ENCODE measurements at regions of chr13 and their contacts with region 1.

Region 1: DNA sequence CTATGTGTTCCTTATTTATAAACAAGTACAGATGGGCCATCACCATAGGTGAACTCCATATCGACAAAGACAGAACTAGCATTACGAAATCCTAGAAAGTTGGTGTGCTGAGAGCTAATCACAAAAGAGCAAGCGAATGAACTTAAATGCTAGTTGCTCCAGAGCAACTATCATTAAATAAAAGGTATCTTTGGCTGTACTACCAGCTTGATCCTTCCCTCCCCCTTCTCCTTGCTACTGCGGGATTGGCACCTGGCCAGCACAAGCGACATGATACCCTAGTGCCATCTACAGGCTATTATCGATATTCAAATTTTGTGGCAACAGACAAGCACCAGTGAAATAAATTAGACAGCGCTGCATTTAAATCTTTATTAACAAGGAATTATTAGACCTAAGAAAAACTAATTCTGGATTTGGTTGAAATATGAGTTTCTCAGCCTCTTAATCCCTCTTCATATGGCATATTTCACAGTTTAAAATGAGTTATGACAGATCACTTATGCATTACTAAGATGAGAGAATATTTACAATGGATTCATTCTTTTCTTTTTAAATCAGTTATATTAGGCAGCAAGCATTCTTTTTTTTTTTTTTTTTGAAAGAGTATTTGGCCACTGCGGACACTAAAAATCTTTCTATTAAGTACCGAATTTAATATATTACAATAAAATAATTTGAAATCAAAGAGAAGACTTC is 5.8 kb downstream of the PCDH9 start:
- DNase-seq: peak; percentile 82
- ATAC-seq: peak; percentile 73
- H3K4me3 ChIP-seq: no peak overlapping the region
- H3K27ac ChIP-seq: no peak overlapping the region
- H3K4me1 ChIP-seq: peaks cover 2% of the 10 kb centered on the region
- H3K27me3 ChIP-seq: no peaks in the 10 kb centered on the region
- CTCF ChIP-seq: peak; percentile 77
- POLR2A ChIP-seq: no peak
- RAD21 ChIP-seq: peak; percentile 91

Region 2: DNA sequence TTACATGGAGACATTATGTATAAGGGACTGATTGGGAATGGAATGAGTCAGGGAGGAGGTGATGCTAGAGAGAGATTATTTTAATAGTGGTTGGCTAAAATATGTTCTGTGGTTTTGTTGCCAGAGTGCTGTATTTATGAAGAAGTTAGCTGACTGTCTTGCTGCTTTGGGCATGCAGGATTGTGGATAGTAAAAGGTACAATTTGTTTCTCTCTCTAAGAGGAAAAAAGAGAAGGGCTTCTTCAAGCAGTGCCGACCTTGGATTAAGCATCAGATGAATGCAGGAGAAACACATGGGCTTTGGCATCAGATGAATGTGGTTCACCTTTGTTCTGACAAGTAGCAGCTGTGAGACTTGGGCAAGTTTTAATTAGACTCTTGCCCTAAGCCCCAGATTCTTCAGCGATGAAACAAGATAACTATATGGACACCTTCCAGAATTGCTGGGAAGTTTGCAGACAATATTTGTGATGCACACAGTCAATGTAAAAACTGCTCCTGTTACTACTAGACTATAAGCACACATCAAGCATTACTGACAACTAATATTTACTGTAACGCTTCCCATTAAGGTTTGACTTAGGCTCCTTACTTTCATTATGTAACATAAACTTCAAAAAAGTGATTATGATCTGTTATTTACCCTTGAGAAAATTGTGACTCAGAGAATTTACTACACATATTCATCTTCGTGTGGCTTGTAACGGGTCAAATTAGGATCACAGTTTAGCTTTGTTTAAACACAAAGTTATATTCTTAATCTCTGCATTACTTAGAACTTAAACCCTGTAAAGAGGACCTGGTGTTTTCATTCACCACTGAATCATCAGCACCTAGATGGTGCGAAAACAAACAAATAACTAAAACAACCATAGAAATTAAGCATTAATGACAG is 818.1 kb before region 1 on chr13:
- CTCF ChIA-PET with region 1: no interaction called
- POLR2A ChIA-PET with region 1: no interaction called
- dilution Hi-C with region 1: no loop called
- in situ Hi-C with region 1: no loop called
- intact Hi-C with region 1: loop called (anchors 10 kb)
- DNase-seq: peak; percentile 65
- ATAC-seq: peak; percentile 83
- H3K4me3 ChIP-seq: no peak overlapping the region
- H3K27ac ChIP-seq: no peak overlapping the region
- H3K4me1 ChIP-seq: peaks cover 2% of the 10 kb centered on the region
- H3K27me3 ChIP-seq: no peaks in the 10 kb centered on the region
- CTCF ChIP-seq: no peak
- POLR2A ChIP-seq: no peak
- RAD21 ChIP-seq: no peak

Region 3: GRCh38 chr13:66513728-66514127 is 710.6 kb before region 1 on chr13:
- CTCF ChIA-PET with region 1: no interaction called
- POLR2A ChIA-PET with region 1: no interaction called
- dilution Hi-C with region 1: no loop called
- in situ Hi-C with region 1: no loop called
- intact Hi-C with region 1: no loop called
- DNase-seq: peak; percentile 16
- ATAC-seq: no peak
- H3K4me3 ChIP-seq: no peak overlapping the region
- H3K27ac ChIP-seq: no peak overlapping the region
- H3K4me1 ChIP-seq: no peaks in the 10 kb centered on the region
- H3K27me3 ChIP-seq: no peaks in the 10 kb centered on the region
- CTCF ChIP-seq: no peak
- POLR2A ChIP-seq: no peak
- RAD21 ChIP-seq: no peak

Region 4: GRCh38 chr13:66618702-66619101 is 605.6 kb before region 1 on chr13:
- CTCF ChIA-PET with region 1: interaction called, 6 read pairs
- POLR2A ChIA-PET with region 1: no interaction called
- dilution Hi-C with region 1: no loop called
- in situ Hi-C with region 1: loop called (anchors 5 kb)
- intact Hi-C with region 1: loop called (anchors 5 kb)
- DNase-seq: peak; percentile 63
- ATAC-seq: peak; percentile 83
- H3K4me3 ChIP-seq: no peak overlapping the region
- H3K27ac ChIP-seq: no peak overlapping the region
- H3K4me1 ChIP-seq: no peaks in the 10 kb centered on the region
- H3K27me3 ChIP-seq: no peaks in the 10 kb centered on the region
- CTCF ChIP-seq: peak; percentile 59
- POLR2A ChIP-seq: no peak
- RAD21 ChIP-seq: peak; percentile 62

Region 5: DNA sequence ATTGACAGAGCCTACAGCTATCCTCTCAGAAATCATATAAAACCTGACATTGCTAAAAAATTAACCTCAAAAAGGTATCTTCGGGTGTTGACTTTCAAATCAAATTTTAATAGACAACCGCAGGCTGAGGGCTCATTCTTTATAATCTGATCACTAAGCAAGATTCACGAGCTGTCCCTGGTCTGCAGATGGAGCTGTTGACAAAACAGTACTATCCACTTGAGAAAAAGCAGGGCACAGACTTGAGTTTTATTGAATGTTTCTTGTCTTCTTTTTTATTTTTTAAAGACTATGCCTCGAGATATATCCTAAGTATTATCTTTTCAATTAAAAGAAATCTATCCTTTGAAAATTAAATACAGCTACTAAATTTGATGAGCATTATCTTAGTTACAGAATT is 534.7 kb before region 1 on chr13:
- CTCF ChIA-PET with region 1: interaction called, 5 read pairs
- POLR2A ChIA-PET with region 1: no interaction called
- dilution Hi-C with region 1: no loop called
- in situ Hi-C with region 1: loop called (anchors 10 kb)
- intact Hi-C with region 1: loop called (anchors 1 kb)
- DNase-seq: peak; percentile 40
- ATAC-seq: peak; percentile 49
- H3K4me3 ChIP-seq: no peak overlapping the region
- H3K27ac ChIP-seq: no peak overlapping the region
- H3K4me1 ChIP-seq: no peaks in the 10 kb centered on the region
- H3K27me3 ChIP-seq: no peaks in the 10 kb centered on the region
- CTCF ChIP-seq: peak; percentile 42
- POLR2A ChIP-seq: no peak
- RAD21 ChIP-seq: peak; percentile 51

Region 6: GRCh38 chr13:66994097-66994496 is 230.2 kb before region 1 on chr13:
- CTCF ChIA-PET with region 1: no interaction called
- POLR2A ChIA-PET with region 1: no interaction called
- dilution Hi-C with region 1: no loop called
- in situ Hi-C with region 1: no loop called
- intact Hi-C with region 1: loop called (anchors 2 kb)
- DNase-seq: peak; percentile 52
- ATAC-seq: peak; percentile 89
- H3K4me3 ChIP-seq: peak overlapping the region; percentile 28
- H3K27ac ChIP-seq: no peak overlapping the region
- H3K4me1 ChIP-seq: 0 out of 2 replicates have a peak, but pooled peaks cover 3% of the 10 kb centered on the region
- H3K27me3 ChIP-seq: no peaks in the 10 kb centered on the region
- CTCF ChIP-seq: peak; percentile 68
- POLR2A ChIP-seq: no peak
- RAD21 ChIP-seq: peak; percentile 54

Region 7: DNA sequence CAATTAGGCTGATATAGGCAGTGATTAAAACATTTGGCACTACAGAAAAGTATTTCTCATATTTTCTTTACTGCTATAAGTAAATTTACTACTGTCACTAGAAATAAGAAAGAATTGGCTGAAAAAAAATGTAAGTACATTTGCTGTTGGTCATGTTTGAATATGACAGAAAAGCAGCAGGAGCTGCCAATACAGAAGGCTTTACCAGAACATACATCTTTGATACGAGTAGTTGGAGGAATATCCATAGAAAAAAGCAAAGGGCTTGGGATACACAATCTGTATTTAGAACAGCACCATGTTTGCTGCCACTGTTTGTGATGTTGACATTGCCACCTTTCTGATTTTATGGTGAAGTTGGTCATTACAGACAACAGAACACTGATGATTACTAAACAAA is 15.7 kb before region 1 on chr13:
- CTCF ChIA-PET with region 1: no interaction called
- POLR2A ChIA-PET with region 1: no interaction called
- dilution Hi-C with region 1: no loop called
- in situ Hi-C with region 1: no loop called
- intact Hi-C with region 1: no loop called
- DNase-seq: no peak
- ATAC-seq: no peak
- H3K4me3 ChIP-seq: no peak overlapping the region
- H3K27ac ChIP-seq: no peak overlapping the region
- H3K4me1 ChIP-seq: no peaks in the 10 kb centered on the region
- H3K27me3 ChIP-seq: no peaks in the 10 kb centered on the region
- CTCF ChIP-seq: no peak
- POLR2A ChIP-seq: no peak
- RAD21 ChIP-seq: no peak